Psoas muscle (tissue), 8 donors: ENCODE measurements at regions of chr5 and their contacts with region 1.

Region 1: GRCh38 chr5:160260881-160261815 is 31.8 kb downstream of the FABP6 start:
- DNase-seq: no peak
- ATAC-seq: no peak
- H3K4me3 ChIP-seq: no peak overlapping the region
- H3K27ac ChIP-seq: no peak overlapping the region
- H3K4me1 ChIP-seq: no peaks in the 10 kb centered on the region
- H3K27me3 ChIP-seq: no peaks in the 10 kb centered on the region
- CTCF ChIP-seq: no peak

Region 2: DNA sequence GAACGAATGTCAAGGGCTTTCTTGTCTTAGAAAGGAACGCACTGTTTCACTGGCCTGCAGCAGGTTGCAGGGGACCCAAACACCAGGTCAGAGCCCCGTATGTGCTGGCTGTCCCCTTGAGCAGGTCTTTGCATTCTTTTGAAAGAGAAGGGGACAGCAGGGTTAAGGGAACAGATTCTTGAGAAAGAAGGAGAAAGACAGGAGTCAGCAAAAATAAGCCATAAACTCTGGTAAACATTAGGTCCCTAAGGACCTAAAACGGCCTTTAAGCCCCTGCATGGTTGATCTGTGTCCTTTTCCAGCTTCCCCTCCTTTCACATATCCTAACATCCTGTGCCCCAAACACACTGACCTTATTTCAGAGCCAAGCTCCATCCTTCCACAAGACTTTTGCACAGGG is 535.7 kb before region 1 on chr5:
- intact Hi-C with region 1: no loop called
- DNase-seq: no peak
- ATAC-seq: no peak
- H3K4me3 ChIP-seq: no peak overlapping the region
- H3K27ac ChIP-seq: no peak overlapping the region
- H3K4me1 ChIP-seq: no peaks in the 10 kb centered on the region
- H3K27me3 ChIP-seq: no peaks in the 10 kb centered on the region
- CTCF ChIP-seq: no peak

Region 3: GRCh38 chr5:160133071-160133917 is 127.9 kb before region 1 on chr5:
- intact Hi-C with region 1: no loop called
- DNase-seq: peak in 1 of 2 donors; percentile 43
- ATAC-seq: peak; percentile 34 to 81 (median 68)
- H3K4me3 ChIP-seq: peak overlapping the region; percentile 38
- H3K27ac ChIP-seq: no peak overlapping the region
- H3K4me1 ChIP-seq: no peaks in the 10 kb centered on the region
- H3K27me3 ChIP-seq: no peaks in the 10 kb centered on the region
- CTCF ChIP-seq: no peak

Region 4: DNA sequence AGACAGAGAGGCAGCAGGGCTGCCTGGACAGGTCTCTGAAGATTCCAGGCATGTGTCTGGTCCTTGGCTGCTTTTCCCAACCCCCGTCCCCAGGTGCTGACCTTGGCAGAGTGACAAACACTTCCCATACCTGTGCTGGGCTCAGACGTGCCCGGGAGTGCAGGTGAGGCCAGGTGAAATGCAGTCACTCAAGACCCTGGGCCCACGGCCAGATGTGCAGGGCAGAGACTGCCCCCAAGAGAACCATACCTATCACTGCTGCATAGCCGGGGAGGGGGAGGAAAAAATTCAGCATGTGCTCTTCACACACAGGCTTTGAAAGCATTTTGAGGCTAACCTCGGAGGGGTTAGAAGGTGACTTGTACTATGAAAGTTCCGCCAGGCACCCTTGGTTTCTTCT is 28.6 kb after region 1 on chr5:
- intact Hi-C with region 1: loop called in 1 of 2 experiments (anchors 1 kb)
- DNase-seq: no peak
- ATAC-seq: no peak
- H3K4me3 ChIP-seq: no peak overlapping the region
- H3K27ac ChIP-seq: no peak overlapping the region
- H3K4me1 ChIP-seq: peaks cover 7% of the 10 kb centered on the region
- H3K27me3 ChIP-seq: no peaks in the 10 kb centered on the region
- CTCF ChIP-seq: no peak